Dorsolateral prefrontal cortex (tissue), 120 donors: ENCODE measurements at regions of chr22 and their contacts with region 1.

Region 1: DNA sequence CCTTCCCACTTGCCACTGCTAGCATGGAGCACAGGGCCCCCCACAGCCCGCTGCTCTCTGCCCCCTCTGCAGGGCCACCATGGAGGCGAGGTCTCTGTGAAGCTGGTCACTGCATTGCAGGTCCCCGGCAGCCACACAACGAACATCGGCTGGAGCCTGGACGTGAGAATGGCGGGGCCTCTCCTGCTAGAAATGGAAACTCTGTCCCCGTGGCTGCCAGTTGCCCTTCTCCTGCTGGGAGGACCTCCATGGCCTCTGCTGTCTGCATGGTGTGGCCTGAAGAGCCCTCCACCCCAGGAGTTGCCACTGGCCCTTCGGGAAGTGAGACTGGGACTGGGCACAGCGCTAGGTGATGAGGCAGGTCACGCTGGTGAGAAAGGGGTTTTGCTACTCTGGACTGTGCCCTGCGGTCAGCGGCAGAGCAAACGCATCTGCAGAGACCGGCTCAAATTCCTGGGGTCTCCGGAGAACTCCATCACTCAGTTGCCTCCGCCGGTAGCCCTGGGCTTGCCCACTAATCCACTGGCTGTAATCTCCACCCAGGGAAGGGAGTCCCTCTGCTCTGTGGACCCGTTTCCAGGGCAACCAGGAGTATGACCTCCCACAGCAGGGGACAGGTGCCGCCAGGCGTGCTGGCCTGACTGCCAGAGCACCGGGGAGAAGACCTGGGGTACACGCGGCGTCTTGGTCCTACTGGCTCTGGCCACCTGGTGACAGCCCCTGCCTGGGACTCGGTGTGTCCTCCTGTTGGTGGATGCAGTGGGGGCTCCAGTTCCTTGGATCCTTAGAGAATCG is 806.3 kb downstream of the BRD1 start:
- DNase-seq: peak in 5 of 10 donors; percentile 12 to 39 (median 28)
- H3K4me3 ChIP-seq: no peak overlapping the region
- H3K27ac ChIP-seq: no peak overlapping the region
- H3K27me3 ChIP-seq: peaks cover 0 to 15% (median 0%) of the 10 kb centered on the region in 45 donors
- CTCF ChIP-seq: no peak

Region 2: GRCh38 chr22:48894064-48894671 is 127.2 kb before region 1 on chr22:
- intact Hi-C with region 1: no loop called
- DNase-seq: peak in 1 of 10 donors; percentile 14
- H3K4me3 ChIP-seq: no peak overlapping the region
- H3K27ac ChIP-seq: no peak overlapping the region
- H3K27me3 ChIP-seq: peaks cover 0 to 10% (median 0%) of the 10 kb centered on the region in 45 donors
- CTCF ChIP-seq: peak in 39 of 56 donors; percentile 9 to 46 (median 29)

Region 3: DNA sequence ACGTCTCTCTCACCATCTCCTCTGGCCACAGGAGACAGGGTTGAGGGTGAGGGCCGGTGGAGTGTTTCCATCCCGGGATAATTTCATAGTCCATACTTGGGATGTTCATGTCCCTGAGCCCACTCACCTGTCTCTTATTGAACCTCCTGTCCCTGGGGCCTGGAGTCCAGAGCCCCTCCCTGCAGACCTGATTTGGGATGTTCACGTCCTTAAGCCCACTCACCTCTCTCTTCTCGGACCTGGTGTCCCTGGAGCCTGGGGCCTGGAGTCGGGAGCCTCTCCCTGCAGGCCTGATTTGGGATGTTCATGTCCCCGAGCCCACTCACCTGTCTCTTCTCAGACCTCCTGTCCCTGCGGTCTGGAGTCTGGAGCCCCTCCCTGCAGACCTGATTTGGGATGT is 61.8 kb before region 1 on chr22:
- intact Hi-C with region 1: loop called in 1 of 2 experiments (anchors 2 kb)
- DNase-seq: peak in 4 of 10 donors; percentile 10 to 21 (median 16)
- H3K4me3 ChIP-seq: no peak overlapping the region
- H3K27ac ChIP-seq: no peak overlapping the region
- H3K27me3 ChIP-seq: peaks cover 0 to 13% (median 0%) of the 10 kb centered on the region in 45 donors
- CTCF ChIP-seq: no peak

Region 4: DNA sequence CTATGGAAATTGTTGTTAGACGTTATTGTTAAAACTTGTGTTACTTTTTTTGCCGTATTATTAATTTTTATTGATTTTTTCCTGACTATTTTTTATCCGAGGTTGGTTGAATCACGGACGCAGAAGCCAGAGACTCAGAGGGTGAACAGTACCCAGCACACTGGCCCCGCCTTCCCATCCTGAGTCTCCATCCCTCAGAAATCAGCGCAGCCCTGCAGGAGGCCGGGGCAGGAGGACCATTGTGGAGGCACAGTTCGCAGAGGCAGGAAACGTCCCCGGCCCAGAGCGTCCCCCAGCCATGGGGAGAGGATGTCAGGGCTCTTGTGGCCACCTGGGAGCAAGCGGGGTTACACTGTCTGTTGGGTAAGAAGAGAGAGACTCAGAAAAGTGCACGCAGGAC is 36.7 kb before region 1 on chr22:
- intact Hi-C with region 1: no loop called
- DNase-seq: peak in 1 of 10 donors; percentile 25
- H3K4me3 ChIP-seq: no peak overlapping the region
- H3K27ac ChIP-seq: no peak overlapping the region
- H3K27me3 ChIP-seq: no peaks in the 10 kb centered on the region
- CTCF ChIP-seq: no peak